Activated CD4-positive, alpha-beta T cell treated with anti-CD3 and anti-CD28 coated beads for 36 hours (primary cell): ENCODE measurements at regions of chr18 and their contacts with region 1.

Region 1: GRCh38 chr18:38940863-38941531 is 1375.4 kb upstream of the CELF4 start:
- DNase-seq: peak; percentile 66
- ATAC-seq: peak; percentile 81
- H3K4me3 Mint-ChIP-seq: peak overlapping the region; percentile 58
- H3K27ac Mint-ChIP-seq: peak overlapping the region; percentile 94
- H3K4me1 Mint-ChIP-seq: peaks cover 44% of the 10 kb centered on the region
- H3K27me3 Mint-ChIP-seq: no peaks in the 10 kb centered on the region

Region 2: GRCh38 chr18:38497266-38497665 is 443.7 kb before region 1 on chr18:
- CTCF ChIA-PET with region 1: no interaction called
- POLR2A ChIA-PET with region 1: no interaction called
- intact Hi-C with region 1: loop called in 1 of 2 experiments (anchors 2 kb)
- DNase-seq: peak; percentile 32
- ATAC-seq: peak; percentile 48
- H3K4me3 Mint-ChIP-seq: no peak overlapping the region
- H3K27ac Mint-ChIP-seq: no peak overlapping the region
- H3K4me1 Mint-ChIP-seq: peaks cover 20% of the 10 kb centered on the region
- H3K27me3 Mint-ChIP-seq: peaks cover 3% of the 10 kb centered on the region

Region 3: DNA sequence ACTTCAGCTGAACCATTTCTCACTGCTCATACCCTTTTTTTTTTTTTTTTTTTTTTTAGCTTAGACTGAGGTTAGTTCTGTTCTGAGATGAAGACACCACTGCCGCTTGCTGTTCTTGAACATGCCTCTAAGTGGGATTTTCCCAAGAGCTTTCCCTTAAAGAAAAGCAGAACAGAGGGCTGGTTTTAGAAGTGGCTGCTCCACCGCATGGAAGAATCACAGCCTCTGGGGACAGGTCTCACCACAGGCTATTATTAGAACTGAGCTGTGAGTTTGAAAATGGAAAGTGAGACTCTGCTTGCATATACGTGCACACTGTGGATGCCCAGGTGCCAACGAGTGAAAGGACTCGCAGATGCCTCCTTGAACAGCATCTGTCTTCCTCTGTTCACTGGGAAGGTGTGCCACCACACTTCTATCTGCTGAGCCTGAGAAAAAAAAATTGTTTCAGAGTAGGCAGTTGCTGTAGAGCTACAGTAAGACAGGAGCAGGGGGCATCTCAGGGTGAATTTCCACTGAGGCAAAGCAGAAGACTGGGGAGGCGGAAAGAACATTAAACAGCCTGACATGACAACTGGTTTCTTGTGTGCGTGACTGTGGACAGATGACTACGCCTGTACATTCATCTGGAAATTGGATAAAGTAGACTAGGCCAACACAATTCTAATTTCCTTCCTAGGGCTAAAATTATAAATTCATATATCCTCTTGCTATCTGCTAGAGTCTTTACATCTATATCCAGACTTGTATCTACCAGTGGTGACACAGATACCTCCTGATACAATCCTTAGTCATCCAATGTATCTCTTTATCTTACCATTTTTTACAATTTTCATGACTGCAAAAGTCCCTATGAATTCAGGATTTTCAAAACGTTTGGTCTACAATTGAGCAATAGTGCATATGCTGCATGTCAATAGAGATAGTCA is 329.7 kb before region 1 on chr18:
- CTCF ChIA-PET with region 1: no interaction called
- POLR2A ChIA-PET with region 1: no interaction called
- intact Hi-C with region 1: loop called in 1 of 2 experiments (anchors 1 kb)
- DNase-seq: peak; percentile 54
- ATAC-seq: peak; percentile 76
- H3K4me3 Mint-ChIP-seq: no peak overlapping the region
- H3K27ac Mint-ChIP-seq: peak overlapping the region; percentile 80
- H3K4me1 Mint-ChIP-seq: peaks cover 38% of the 10 kb centered on the region
- H3K27me3 Mint-ChIP-seq: no peaks in the 10 kb centered on the region

Region 4: GRCh38 chr18:38635709-38636430 is 305.1 kb before region 1 on chr18:
- CTCF ChIA-PET with region 1: no interaction called
- POLR2A ChIA-PET with region 1: no interaction called
- intact Hi-C with region 1: no loop called
- DNase-seq: no peak
- ATAC-seq: no peak
- H3K4me3 Mint-ChIP-seq: no peak overlapping the region
- H3K27ac Mint-ChIP-seq: no peak overlapping the region
- H3K4me1 Mint-ChIP-seq: peaks cover 4% of the 10 kb centered on the region
- H3K27me3 Mint-ChIP-seq: no peaks in the 10 kb centered on the region

Region 5: GRCh38 chr18:38751898-38752297 is 189.1 kb before region 1 on chr18:
- CTCF ChIA-PET with region 1: no interaction called
- POLR2A ChIA-PET with region 1: no interaction called
- intact Hi-C with region 1: loop called in 1 of 2 experiments (anchors 1 kb)
- DNase-seq: peak; percentile 35
- ATAC-seq: peak; percentile 23
- H3K4me3 Mint-ChIP-seq: no peak overlapping the region
- H3K27ac Mint-ChIP-seq: no peak overlapping the region
- H3K4me1 Mint-ChIP-seq: peaks cover 16% of the 10 kb centered on the region
- H3K27me3 Mint-ChIP-seq: no peaks in the 10 kb centered on the region

Region 6: DNA sequence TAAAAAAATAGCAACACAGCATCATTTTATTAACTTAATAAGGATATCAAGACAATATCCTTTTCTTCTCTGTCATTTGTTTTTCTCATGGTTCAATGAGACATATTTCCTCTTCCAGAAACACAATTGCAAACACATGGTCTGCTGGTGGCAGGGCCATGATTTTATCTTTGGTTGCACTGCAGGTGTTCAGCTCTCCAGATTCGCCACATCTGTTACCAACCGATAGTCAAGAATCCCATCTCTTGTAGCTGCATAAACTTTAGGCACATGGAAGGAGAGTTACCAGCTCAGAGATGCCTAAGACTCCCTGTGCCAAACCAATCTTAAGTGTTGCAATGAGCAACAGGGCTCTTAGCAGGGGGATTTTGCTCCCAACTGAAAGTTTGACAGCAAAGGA is 72.2 kb before region 1 on chr18:
- CTCF ChIA-PET with region 1: no interaction called
- POLR2A ChIA-PET with region 1: no interaction called
- intact Hi-C with region 1: no loop called
- DNase-seq: no peak
- ATAC-seq: no peak
- H3K4me3 Mint-ChIP-seq: no peak overlapping the region
- H3K27ac Mint-ChIP-seq: no peak overlapping the region
- H3K4me1 Mint-ChIP-seq: no peaks in the 10 kb centered on the region
- H3K27me3 Mint-ChIP-seq: no peaks in the 10 kb centered on the region

Region 7: GRCh38 chr18:38993342-38993741 is 52.3 kb after region 1 on chr18:
- CTCF ChIA-PET with region 1: no interaction called
- POLR2A ChIA-PET with region 1: no interaction called
- intact Hi-C with region 1: no loop called
- DNase-seq: no peak
- ATAC-seq: no peak
- H3K4me3 Mint-ChIP-seq: no peak overlapping the region
- H3K27ac Mint-ChIP-seq: no peak overlapping the region
- H3K4me1 Mint-ChIP-seq: no peaks in the 10 kb centered on the region
- H3K27me3 Mint-ChIP-seq: no peaks in the 10 kb centered on the region

Region 8: DNA sequence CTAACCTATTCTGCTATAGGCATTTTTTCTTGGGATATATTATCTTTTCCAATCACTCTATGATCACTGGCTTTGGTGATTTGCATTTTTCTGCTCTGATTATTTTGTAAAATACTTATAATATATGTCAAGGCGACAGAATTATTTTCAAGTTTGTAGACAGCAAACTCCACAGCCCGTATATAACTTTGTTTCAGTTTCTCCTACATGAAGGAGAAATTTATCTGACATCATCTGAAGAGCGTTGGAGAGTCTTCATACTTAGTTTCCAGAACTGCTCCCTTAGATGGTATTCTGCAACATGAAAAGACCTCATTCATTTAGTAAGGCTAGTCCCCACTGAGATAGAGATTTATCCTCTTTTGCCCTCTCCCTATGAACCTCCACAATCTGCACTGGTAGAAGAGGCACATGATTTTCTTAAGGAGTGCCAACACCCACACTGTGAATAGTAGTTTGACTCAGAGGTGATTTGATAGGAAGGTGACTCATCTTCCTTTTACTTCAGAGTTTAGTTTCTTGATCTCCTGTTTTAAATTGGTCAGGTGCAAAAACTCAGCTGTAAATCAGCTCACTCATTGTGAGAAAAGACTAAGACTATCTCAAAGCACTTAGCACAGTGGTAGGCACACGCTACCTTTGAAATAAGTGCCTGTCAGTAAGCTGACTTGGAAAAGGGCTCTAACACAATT is 473.2 kb after region 1 on chr18:
- CTCF ChIA-PET with region 1: no interaction called
- POLR2A ChIA-PET with region 1: no interaction called
- intact Hi-C with region 1: loop called in 1 of 2 experiments (anchors 1 kb)
- DNase-seq: no peak
- ATAC-seq: peak; percentile 97
- H3K4me3 Mint-ChIP-seq: no peak overlapping the region
- H3K27ac Mint-ChIP-seq: no peak overlapping the region
- H3K4me1 Mint-ChIP-seq: peaks cover 9% of the 10 kb centered on the region
- H3K27me3 Mint-ChIP-seq: peaks cover 4% of the 10 kb centered on the region